ENCODE measurements at regions of chr2 and their contacts with region 1.

Region 1: GRCh38 chr2:232668805-232669444 is 28.2 kb upstream of the GIGYF2 start:
- DNase-seq: no peak
- H3K4me3 ChIP-seq: no peak overlapping the region
- H3K27me3 ChIP-seq: no peaks in the 10 kb centered on the region
- CTCF ChIP-seq: peak; percentile 72

Region 2: GRCh38 chr2:232600053-232600773 is 68.7 kb before region 1 on chr2:
- CTCF ChIA-PET with region 1: interaction called, 12 read pairs
- POLR2A ChIA-PET with region 1: no interaction called
- DNase-seq: no peak
- H3K4me3 ChIP-seq: no peak overlapping the region
- H3K27me3 ChIP-seq: peaks cover 3% of the 10 kb centered on the region; the same call in 1 of the 2 replicates
- CTCF ChIP-seq: no peak

Region 3: DNA sequence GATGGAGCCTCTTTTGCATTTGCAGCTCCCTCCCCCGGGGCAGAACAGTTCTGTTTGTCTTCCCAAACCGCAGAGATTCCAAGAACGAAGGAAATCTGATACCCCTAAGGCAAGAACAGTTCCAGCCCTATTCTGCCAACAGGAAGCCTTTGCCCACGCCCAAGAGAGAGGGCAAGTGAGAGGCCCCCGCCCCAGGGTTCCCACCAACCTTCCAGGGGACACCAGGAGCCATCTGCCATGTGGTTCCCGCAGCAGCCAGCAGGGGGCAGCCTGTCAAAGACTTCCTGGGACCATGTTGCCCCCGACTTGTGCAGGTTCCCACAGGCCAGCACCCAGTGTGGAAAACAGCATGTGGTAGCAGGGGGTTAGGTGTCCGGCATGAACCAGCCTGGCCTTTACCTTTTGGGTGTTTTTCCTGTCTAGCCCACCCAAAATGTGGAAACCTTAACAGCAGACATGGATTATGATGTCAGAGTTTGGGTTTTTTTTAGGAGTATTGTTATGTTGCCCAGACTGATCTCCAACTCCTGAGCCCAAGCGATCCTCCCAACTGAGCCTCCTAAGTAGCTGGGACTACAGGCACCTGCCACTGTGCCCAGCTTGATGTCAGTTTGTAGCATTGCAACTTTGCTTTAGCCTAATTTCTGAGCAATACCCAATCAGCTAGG is 57.2 kb before region 1 on chr2:
- CTCF ChIA-PET with region 1: interaction called, 34 read pairs
- POLR2A ChIA-PET with region 1: no interaction called
- DNase-seq: peak; percentile 58
- H3K4me3 ChIP-seq: no peak overlapping the region
- H3K27me3 ChIP-seq: no peaks in the 10 kb centered on the region
- CTCF ChIP-seq: peak; percentile 91

Region 4: DNA sequence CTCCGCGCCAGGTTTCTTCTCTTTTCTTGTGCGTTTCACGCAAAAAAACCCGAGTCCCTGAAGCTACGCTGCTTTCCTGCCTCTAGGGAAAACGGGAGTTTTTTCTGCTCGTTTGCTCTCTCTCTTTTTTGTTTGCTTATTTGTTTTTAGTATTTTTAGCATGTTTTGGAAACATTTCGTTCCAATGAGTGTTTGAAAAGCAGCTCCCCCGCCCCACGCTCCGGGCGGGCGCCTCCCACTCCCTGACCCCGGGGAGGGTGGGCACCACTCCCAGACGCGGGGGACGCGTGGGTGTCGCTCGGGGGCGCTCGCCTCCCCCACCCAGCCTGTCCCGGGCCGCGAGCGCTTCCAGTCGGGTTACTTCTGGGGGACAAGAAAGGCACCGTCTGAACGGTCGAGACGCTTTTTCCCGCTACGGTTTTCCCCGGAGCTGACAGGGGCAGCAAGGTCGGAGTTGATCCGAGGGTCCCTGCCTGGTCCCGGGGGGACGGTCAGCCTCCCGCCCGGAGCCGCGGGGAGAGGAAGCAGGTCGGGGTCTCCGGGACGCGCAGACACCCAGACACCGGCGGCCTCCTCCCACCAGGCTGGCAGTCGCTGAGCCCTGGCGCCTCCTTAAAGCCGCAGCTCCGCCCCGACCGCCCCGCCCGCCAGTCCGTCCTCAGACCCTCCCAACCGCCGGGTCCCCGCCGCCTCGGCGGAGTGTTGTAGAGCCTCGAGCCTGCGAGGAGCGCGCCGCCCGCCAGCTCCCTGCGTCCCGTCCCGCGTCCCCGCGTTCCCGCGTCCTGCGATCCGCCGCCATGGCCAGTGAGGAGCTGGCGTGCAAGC is 35.8 kb before region 1 on chr2 and contains the start of gene EFHD1:
- CTCF ChIA-PET with region 1: interaction called, 14 read pairs
- POLR2A ChIA-PET with region 1: no interaction called
- DNase-seq: peak; percentile 35
- H3K4me3 ChIP-seq: peak within 1 kb of the TSS; percentile 55
- H3K27me3 ChIP-seq: peaks cover 2% of the 10 kb centered on the region; the same call in 1 of the 2 replicates
- CTCF ChIP-seq: no peak
- polyA plus RNA-seq, gene EFHD1: 60.0 and 76.5 TPM in 2 replicates

Measured in BJ (cell line).